ENCODE measurements at regions of chr7 and their contacts with region 1.

Region 1: DNA sequence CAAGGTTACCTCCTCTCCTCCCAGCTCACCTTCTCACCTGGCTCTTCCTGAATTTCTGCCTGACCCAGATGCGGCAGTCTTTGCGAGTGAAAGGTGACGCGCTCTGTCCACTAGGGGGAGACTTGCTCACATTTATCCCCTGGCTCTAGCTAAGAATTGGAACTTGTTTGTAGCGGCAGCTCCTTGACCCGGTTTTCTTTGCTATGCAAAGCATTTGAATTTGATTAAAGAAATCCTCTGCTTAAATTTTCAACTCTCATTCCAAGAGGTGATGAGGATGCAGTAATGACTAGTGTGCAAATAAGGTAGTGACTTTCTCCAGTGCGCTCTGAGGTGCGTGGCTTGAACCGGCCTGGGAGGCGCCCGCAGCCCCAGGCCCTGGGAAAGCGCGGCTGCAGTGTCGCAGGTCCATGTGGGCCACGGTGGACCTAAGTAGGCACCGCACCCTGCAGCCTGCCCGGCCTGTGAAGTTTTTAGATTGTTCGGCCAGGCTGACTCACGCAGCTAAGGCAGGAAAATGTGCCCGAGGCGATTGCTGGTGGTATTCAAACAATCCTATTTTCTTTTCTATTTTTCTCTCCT is 336.9 kb upstream of the NPSR1 start:
- DNase-seq: peak; percentile 71 to 80
- H3K4me3 ChIP-seq: peak overlapping the region; percentile 43; the same call in 1 of the 2 replicates
- H3K27ac ChIP-seq: peak overlapping the region; percentile 35; the same call in 1 of the 2 replicates
- H3K4me1 ChIP-seq: peaks cover 19% of the 10 kb centered on the region
- H3K27me3 ChIP-seq: no peaks in the 10 kb centered on the region
- CTCF ChIP-seq: peak; percentile 98

Region 2: GRCh38 chr7:34143402-34143801 is 177.7 kb before region 1 on chr7:
- CTCF ChIA-PET with region 1: no interaction called
- POLR2A ChIA-PET with region 1: no interaction called
- intact Hi-C with region 1: loop called (anchors 5 kb)
- DNase-seq: no peak
- H3K4me3 ChIP-seq: no peak overlapping the region
- H3K27ac ChIP-seq: no peak overlapping the region
- H3K4me1 ChIP-seq: no peaks in the 10 kb centered on the region
- H3K27me3 ChIP-seq: peaks cover 14% of the 10 kb centered on the region; the same call in 1 of the 2 replicates
- CTCF ChIP-seq: no peak

Region 3: GRCh38 chr7:34309116-34309515 is 12.0 kb before region 1 on chr7:
- CTCF ChIA-PET with region 1: no interaction called
- POLR2A ChIA-PET with region 1: no interaction called
- intact Hi-C with region 1: no loop called
- DNase-seq: no peak
- H3K4me3 ChIP-seq: no peak overlapping the region
- H3K27ac ChIP-seq: no peak overlapping the region
- H3K4me1 ChIP-seq: no peaks in the 10 kb centered on the region
- H3K27me3 ChIP-seq: peaks cover 8% of the 10 kb centered on the region; the same call in 1 of the 2 replicates
- CTCF ChIP-seq: no peak

Region 4: GRCh38 chr7:34406848-34407530 is 85.9 kb after region 1 on chr7:
- CTCF ChIA-PET with region 1: no interaction called
- POLR2A ChIA-PET with region 1: no interaction called
- intact Hi-C with region 1: no loop called
- DNase-seq: no peak
- H3K4me3 ChIP-seq: no peak overlapping the region
- H3K27ac ChIP-seq: no peak overlapping the region
- H3K4me1 ChIP-seq: no peaks in the 10 kb centered on the region
- H3K27me3 ChIP-seq: no peaks in the 10 kb centered on the region
- CTCF ChIP-seq: no peak

Region 5: GRCh38 chr7:34430458-34430857 is 109.4 kb after region 1 on chr7:
- CTCF ChIA-PET with region 1: no interaction called
- POLR2A ChIA-PET with region 1: no interaction called
- intact Hi-C with region 1: loop called (anchors 1 kb)
- DNase-seq: peak in 1 of 2 experiments; percentile 24
- H3K4me3 ChIP-seq: no peak overlapping the region
- H3K27ac ChIP-seq: no peak overlapping the region
- H3K4me1 ChIP-seq: no peaks in the 10 kb centered on the region
- H3K27me3 ChIP-seq: peaks cover 4% of the 10 kb centered on the region; the same call in 1 of the 2 replicates
- CTCF ChIP-seq: peak; percentile 71

Region 6: DNA sequence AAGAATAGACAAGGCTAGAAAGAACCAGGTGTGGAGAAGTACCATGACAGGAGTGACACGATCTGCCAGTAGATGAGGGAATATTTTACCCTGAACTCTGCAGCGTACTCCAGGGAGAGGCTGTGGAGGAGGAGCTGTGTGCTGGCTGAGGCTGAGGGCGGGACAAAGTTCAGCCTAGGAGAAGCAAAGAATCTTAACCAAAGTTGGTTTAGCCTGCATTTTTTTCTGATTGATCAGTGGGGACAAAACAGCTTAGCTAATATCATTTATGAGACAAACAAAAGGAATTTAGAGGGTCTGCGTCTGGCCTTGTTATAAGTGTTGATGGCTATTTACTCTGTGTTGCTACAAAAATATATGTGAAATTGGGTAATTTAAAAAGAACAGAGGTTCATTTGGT is 331.7 kb after region 1 on chr7:
- CTCF ChIA-PET with region 1: no interaction called
- POLR2A ChIA-PET with region 1: no interaction called
- intact Hi-C with region 1: loop called (anchors 10 kb)
- DNase-seq: no peak
- H3K4me3 ChIP-seq: no peak overlapping the region
- H3K27ac ChIP-seq: no peak overlapping the region
- H3K4me1 ChIP-seq: no peaks in the 10 kb centered on the region
- H3K27me3 ChIP-seq: peaks cover 8% of the 10 kb centered on the region; the same call in 1 of the 2 replicates
- CTCF ChIP-seq: no peak

Region 7: DNA sequence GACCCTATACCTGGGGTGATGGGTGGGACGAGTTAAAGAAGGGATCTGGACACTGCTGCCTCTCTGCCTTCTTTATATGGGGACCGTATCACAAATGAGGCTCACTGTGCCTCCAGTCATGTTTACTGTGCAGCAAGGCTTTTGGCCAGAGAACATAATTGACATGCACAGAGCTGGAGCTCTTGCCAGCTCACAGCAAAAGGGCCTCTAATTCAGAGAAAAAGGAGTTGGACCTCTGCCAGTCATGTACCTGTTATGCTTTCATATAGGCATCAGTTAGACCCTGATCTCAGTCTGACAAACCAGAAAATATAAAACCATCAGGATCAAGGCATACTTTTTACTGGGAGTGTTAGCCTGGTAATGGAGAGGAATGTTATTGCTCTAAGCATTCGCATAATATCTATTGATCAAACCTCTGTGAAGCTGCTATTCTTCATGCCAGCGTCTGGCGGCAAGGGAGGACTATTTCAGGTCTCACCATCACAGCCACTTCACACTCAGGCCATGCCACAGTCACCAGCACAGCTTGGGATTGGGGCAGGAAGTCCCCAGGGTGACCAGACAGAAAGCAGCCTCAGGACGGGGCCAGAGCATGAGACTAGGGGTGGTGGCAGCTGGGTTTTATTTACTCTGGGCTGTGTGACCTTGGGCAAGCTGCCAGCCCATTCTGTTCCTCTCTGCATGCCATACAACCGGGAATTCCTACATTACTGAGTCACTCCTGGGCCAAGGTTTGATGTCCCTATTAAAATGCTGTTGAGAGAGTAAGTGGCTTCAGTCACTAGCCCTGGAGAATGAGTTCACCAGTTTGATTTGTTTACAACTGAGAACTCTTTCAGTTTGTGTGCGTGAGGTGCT is 427.0 kb after region 1 on chr7:
- CTCF ChIA-PET with region 1: no interaction called
- POLR2A ChIA-PET with region 1: no interaction called
- intact Hi-C with region 1: loop called (anchors 5 kb)
- DNase-seq: peak; percentile 95 to 99
- H3K4me3 ChIP-seq: peak overlapping the region; percentile 4; the same call in 1 of the 2 replicates
- H3K27ac ChIP-seq: peak overlapping the region; percentile 63
- H3K4me1 ChIP-seq: peaks cover 29% of the 10 kb centered on the region
- H3K27me3 ChIP-seq: no peaks in the 10 kb centered on the region
- CTCF ChIP-seq: peak; percentile 44; the same call in 1 of the 2 replicates

Region 8: DNA sequence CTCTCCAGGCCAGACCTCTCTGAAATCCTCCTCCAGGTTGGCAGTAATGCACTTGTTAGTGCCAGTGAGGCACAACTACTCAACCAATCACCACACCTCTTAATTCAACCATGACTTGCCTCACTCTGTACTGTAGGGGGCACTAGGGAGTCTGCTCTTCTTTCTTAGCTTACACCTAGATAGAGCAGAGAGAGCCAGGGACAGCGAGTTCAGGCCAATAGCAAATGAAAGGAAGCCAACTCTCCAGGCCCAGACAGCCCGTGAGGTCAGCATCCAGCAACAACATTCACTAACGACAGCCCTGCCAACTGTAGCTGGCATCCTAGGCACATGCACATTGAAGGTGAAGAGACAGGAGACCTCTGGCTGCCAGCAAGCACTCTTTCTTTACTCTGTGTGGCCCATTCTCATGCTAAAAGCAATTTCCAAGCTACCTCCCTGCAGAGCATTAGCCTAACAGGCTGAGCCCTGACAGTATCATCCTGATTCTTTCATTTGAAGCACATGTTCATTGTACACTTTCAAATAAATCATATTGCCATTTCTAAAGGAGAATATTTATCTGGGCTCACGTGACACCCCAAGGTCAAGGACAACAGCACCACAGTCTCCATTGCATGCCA is 579.9 kb after region 1 on chr7:
- CTCF ChIA-PET with region 1: interaction called, 27 read pairs
- POLR2A ChIA-PET with region 1: no interaction called
- intact Hi-C with region 1: no loop called
- DNase-seq: no peak
- H3K4me3 ChIP-seq: no peak overlapping the region
- H3K27ac ChIP-seq: no peak overlapping the region
- H3K4me1 ChIP-seq: no peaks in the 10 kb centered on the region
- H3K27me3 ChIP-seq: no peaks in the 10 kb centered on the region
- CTCF ChIP-seq: peak; percentile 45

Region 9: GRCh38 chr7:35286422-35286821 is 965.3 kb after region 1 on chr7:
- CTCF ChIA-PET with region 1: no interaction called
- POLR2A ChIA-PET with region 1: no interaction called
- intact Hi-C with region 1: no loop called
- DNase-seq: peak in 1 of 2 experiments; percentile 40
- H3K4me3 ChIP-seq: no peak overlapping the region
- H3K27ac ChIP-seq: no peak overlapping the region
- H3K4me1 ChIP-seq: no peaks in the 10 kb centered on the region
- H3K27me3 ChIP-seq: no peaks in the 10 kb centered on the region
- CTCF ChIP-seq: no peak